CD4-positive, alpha-beta T cell (primary cell): ENCODE measurements at regions of chr6 and their contacts with region 1.

Region 1: GRCh38 chr6:129498950-129499842 is 210.8 kb downstream of the ARHGAP18 start:
- DNase-seq: peak in 4 of 14 experiments; percentile 7 to 77 (median 74)
- ATAC-seq: peak; percentile 82
- H3K4me3 ChIP-seq: peak overlapping the region; percentile 10
- H3K4me3 Mint-ChIP-seq: peak overlapping the region; percentile 18
- H3K27ac ChIP-seq: no peak overlapping the region
- H3K27ac Mint-ChIP-seq: no peak overlapping the region
- H3K4me1 ChIP-seq: peaks cover 18% of the 10 kb centered on the region
- H3K4me1 Mint-ChIP-seq: peaks cover 14% of the 10 kb centered on the region
- H3K27me3 ChIP-seq: no peaks in the 10 kb centered on the region
- H3K27me3 Mint-ChIP-seq: no peaks in the 10 kb centered on the region
- CTCF ChIP-seq: peak; percentile 74

Region 2: GRCh38 chr6:128520436-128521281 is 978.5 kb before region 1 on chr6 and contains the start of gene PTPRK:
- CTCF ChIA-PET with region 1: no interaction called
- POLR2A ChIA-PET with region 1: no interaction called
- intact Hi-C with region 1: loop called in 1 of 2 experiments (anchors 5 kb)
- DNase-seq: peak; percentile 72 to 92 (median 86)
- ATAC-seq: peak; percentile 84
- H3K4me3 ChIP-seq: peak within 1 kb of the TSS; percentile 80
- H3K4me3 Mint-ChIP-seq: peak within 1 kb of the TSS; percentile 98
- H3K27ac ChIP-seq: no peak within 1 kb of the TSS
- H3K27ac Mint-ChIP-seq: peak within 1 kb of the TSS; percentile 88
- H3K4me1 ChIP-seq: peaks cover 26% of the 10 kb centered on the region
- H3K4me1 Mint-ChIP-seq: peaks cover 19% of the 10 kb centered on the region
- H3K27me3 ChIP-seq: peaks cover 32 to 63% of the 10 kb centered on the region in 2 experiments
- H3K27me3 Mint-ChIP-seq: peaks cover 86% of the 10 kb centered on the region
- CTCF ChIP-seq: no peak
- total RNA-seq, gene PTPRK: 8.4 to 10.3 TPM

Region 3: DNA sequence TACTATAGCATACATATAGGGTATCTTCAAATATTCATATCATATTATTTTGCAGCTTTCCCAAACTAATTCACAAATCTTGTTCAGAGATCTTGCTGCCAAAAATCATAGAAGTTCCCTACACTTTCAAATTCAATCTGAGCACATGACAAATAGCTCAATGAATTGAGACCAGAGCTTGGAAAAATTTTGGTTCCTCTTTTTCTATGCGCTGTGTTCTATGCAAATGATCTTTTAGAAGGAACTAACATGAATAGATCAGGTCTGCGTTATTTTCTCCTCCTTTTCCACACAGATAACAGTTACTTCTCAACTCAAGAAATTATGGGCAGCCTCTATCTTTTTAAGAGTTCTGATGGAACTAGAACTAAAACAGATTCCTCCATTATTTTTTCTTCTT is 105.5 kb before region 1 on chr6:
- CTCF ChIA-PET with region 1: no interaction called
- POLR2A ChIA-PET with region 1: no interaction called
- intact Hi-C with region 1: no loop called
- DNase-seq: no peak
- ATAC-seq: no peak
- H3K4me3 ChIP-seq: no peak overlapping the region
- H3K4me3 Mint-ChIP-seq: no peak overlapping the region
- H3K27ac ChIP-seq: no peak overlapping the region
- H3K27ac Mint-ChIP-seq: no peak overlapping the region
- H3K4me1 ChIP-seq: no peaks in the 10 kb centered on the region
- H3K4me1 Mint-ChIP-seq: no peaks in the 10 kb centered on the region
- H3K27me3 ChIP-seq: no peaks in the 10 kb centered on the region
- H3K27me3 Mint-ChIP-seq: no peaks in the 10 kb centered on the region
- CTCF ChIP-seq: no peak

Region 4: DNA sequence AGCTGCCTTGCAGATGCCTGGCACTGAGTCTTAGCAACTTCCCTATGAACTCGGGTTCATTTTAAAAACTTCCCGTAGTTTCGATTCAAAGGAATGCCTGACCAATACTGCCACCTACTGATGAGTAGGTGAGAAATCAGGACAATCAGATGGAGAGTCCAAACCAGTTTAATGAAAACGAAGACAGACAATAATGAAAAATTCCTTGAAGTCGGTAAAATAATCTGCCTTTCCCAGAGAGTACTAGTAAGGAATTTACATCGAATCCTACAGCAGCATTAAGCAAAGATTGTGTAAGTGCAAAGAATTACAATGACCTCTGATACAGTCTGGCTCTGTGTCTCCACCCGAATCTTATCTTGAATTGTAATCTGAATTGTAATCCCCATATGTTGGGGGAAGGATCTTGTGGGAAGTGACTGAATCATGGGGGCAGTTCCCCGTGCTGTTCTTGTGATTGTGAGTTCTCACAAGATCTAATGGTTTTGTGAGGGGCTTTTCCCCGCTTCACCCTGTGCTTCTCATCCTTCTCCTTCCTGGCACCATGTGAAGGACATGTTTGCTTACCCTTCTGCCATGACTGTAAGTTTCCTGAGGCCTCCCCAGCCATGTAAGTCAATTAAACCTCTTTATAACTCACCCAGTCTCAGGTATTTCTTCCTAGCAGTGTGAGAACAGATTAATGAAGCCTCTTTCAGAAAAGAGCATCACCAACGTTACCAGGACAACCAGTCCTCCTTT is 76.4 kb after region 1 on chr6:
- CTCF ChIA-PET with region 1: no interaction called
- POLR2A ChIA-PET with region 1: no interaction called
- intact Hi-C with region 1: loop called (anchors 1 to 2 kb)
- DNase-seq: peak in 4 of 14 experiments; percentile 5 to 54 (median 45)
- ATAC-seq: peak; percentile 49
- H3K4me3 ChIP-seq: peak overlapping the region; percentile 22
- H3K4me3 Mint-ChIP-seq: peak overlapping the region; percentile 34
- H3K27ac ChIP-seq: no peak overlapping the region
- H3K27ac Mint-ChIP-seq: no peak overlapping the region
- H3K4me1 ChIP-seq: no peaks in the 10 kb centered on the region
- H3K4me1 Mint-ChIP-seq: no peaks in the 10 kb centered on the region
- H3K27me3 ChIP-seq: no peaks in the 10 kb centered on the region
- H3K27me3 Mint-ChIP-seq: no peaks in the 10 kb centered on the region
- CTCF ChIP-seq: peak; percentile 84

Region 5: DNA sequence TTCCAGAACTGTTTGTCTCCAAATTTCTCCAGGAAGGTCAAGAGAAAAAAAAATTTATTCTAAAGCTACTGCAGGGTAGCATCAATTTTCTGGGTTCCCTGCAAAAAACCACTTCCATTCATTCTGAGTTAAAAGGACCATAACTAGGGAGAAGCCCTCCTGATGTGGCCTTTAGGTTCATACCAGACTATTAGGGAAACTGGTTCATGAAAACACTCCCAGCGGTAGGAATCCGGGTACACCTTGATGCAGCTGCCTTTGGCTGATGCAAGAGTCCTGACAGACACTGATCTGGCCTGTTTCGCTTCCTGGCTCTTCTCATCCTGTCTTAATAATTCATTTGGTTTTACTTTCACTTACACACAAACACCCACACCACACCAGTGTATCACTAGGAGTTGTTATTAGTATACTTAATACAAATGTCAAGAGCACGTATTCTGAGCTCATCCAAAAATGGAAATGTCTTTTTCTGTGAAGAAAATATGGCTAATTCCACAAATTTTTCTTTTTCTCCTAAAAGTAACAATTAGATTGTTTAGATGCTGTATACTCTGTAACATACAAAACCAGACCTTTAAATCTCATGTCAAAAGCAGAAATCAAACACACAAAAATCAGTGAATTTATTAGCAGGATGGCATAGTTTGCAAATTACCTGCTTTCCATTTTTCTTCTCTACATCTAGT is 249.2 kb after region 1 on chr6:
- CTCF ChIA-PET with region 1: no interaction called
- POLR2A ChIA-PET with region 1: no interaction called
- intact Hi-C with region 1: loop called in 1 of 2 experiments (anchors 5 kb)
- DNase-seq: peak; percentile 13 to 87 (median 30)
- ATAC-seq: peak; percentile 80
- H3K4me3 ChIP-seq: peak overlapping the region; percentile 12
- H3K4me3 Mint-ChIP-seq: peak overlapping the region; percentile 86
- H3K27ac ChIP-seq: peak overlapping the region; percentile 61 to 72
- H3K27ac Mint-ChIP-seq: peak overlapping the region; percentile 88
- H3K4me1 ChIP-seq: peaks cover 28% of the 10 kb centered on the region
- H3K4me1 Mint-ChIP-seq: peaks cover 61% of the 10 kb centered on the region
- H3K27me3 ChIP-seq: no peaks in the 10 kb centered on the region
- H3K27me3 Mint-ChIP-seq: no peaks in the 10 kb centered on the region
- CTCF ChIP-seq: no peak

Region 6: DNA sequence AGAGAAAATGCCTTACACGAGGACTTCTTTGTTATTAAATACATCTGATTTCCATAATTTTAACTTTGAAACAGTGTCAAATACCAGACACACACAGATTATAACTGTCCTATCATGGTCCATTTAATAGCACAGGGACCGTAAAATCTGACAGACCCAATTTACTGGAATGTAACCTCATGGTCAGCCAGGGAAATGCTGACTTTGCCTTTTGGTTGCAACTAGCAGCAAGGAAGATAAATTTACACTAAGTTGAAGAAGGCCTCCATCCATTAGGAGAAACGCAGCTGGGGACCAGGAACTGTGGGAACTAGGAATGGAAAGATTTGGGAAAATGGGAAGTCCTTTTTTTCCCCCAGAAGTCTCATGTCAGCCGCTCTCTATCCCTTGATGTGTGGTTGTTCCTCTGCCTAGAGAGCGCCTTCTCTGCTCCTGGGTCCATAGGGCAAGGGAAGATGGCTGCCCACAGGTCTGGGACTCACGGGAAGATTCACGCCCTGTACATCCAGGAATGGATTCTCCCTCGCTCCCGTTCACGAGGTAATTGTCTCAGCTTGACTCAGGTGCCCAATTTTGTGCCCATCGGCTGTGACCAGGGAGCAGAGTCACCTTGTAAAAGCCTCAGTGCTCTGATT is 444.6 kb after region 1 on chr6:
- CTCF ChIA-PET with region 1: no interaction called
- POLR2A ChIA-PET with region 1: no interaction called
- intact Hi-C with region 1: loop called in 1 of 2 experiments (anchors 2 kb)
- DNase-seq: no peak
- ATAC-seq: no peak
- H3K4me3 ChIP-seq: no peak overlapping the region
- H3K4me3 Mint-ChIP-seq: no peak overlapping the region
- H3K27ac ChIP-seq: no peak overlapping the region
- H3K27ac Mint-ChIP-seq: no peak overlapping the region
- H3K4me1 ChIP-seq: no peaks in the 10 kb centered on the region
- H3K4me1 Mint-ChIP-seq: no peaks in the 10 kb centered on the region
- H3K27me3 ChIP-seq: peaks cover 0 to 4% of the 10 kb centered on the region in 2 experiments
- H3K27me3 Mint-ChIP-seq: peaks cover 10% of the 10 kb centered on the region
- CTCF ChIP-seq: no peak

Region 7: DNA sequence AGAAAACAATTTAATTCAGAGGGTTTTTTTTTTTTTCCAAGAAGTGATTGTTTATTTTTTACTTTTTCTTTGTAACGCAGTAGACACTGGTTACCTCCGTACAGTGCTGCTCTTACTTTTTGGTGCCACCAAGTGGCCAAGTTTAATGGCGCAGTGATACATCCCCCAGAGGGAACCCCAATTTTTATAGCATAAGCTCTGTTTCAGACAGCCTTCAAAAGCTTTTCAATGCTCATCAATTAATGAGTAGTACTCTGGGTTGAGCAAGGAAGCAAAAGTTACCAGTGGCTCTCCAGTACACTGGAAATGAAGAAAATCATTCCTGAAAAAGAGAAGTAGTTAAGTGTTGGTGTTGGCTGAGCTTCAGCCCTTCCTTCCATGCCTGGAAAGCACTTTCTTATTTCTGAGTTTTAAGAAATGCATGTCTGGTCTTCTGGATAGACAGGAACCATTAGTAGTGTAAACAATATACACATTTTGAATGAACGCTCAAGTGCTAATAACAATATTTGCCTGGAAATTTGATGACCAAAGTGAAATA is 1198.9 kb after region 1 on chr6:
- CTCF ChIA-PET with region 1: no interaction called
- POLR2A ChIA-PET with region 1: no interaction called
- intact Hi-C with region 1: loop called in 1 of 2 experiments (anchors 10 kb)
- DNase-seq: peak; percentile 13 to 72 (median 42)
- ATAC-seq: peak; percentile 71
- H3K4me3 ChIP-seq: no peak overlapping the region
- H3K4me3 Mint-ChIP-seq: no peak overlapping the region
- H3K27ac ChIP-seq: no peak overlapping the region
- H3K27ac Mint-ChIP-seq: no peak overlapping the region
- H3K4me1 ChIP-seq: peaks cover 13% of the 10 kb centered on the region
- H3K4me1 Mint-ChIP-seq: peaks cover 35% of the 10 kb centered on the region
- H3K27me3 ChIP-seq: no peaks in the 10 kb centered on the region
- H3K27me3 Mint-ChIP-seq: no peaks in the 10 kb centered on the region
- CTCF ChIP-seq: peak; percentile 85